ENCODE measurements at regions of chr13 and their contacts with region 1.

Region 1: DNA sequence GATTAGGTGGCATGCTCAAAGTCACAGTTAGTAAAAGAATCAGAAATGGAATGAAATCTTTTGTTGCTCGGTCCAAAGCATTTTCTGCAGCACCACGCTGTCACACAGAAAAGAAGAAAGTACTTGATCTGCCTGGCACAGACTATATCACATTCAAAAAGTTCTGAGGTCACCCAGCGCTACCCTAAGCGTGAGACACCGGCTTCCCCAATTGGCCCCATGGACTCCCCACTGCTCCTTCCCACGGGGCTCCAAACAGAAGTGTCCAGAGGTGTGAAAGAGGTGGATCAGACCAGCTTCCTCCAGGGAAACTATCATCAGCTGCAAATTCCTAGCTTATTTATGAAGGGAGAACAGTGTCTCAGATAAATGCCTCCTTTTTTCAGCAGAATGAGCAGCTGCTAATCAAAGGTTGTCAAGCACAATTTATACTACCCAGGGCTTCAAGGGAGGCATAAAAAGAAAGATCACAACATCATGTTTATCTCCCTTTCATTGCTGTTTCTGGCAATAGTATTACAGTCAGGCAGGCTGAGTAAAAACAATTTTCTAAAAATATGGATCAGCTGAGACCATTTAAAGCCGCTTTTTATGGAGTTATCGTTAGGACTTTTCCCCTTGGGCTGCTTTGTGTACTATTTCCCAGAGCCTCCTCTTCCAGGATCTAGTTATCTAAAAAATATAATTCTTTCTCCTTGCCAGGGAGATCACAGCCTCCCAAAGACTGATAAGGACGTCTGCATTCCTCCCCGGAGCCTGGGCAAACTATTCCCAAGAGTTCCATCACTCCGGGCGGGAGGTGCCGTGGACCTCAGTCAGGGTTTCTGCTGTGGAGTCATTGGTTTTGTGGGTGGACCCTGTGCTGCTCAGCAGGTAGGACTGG is 208.0 kb downstream of the LHFPL6 start:
- DNase-seq: no peak
- ATAC-seq: peak; percentile 40 to 73 (median 45)
- H3K4me3 ChIP-seq: peak overlapping the region in 5 of 10 donors; percentile 7 to 15 (median 8)
- H3K27ac ChIP-seq: peak overlapping the region in 9 of 10 donors; percentile 6 to 73 (median 52)
- H3K4me1 ChIP-seq: peaks cover 0 to 74% (median 46%) of the 10 kb centered on the region in 9 donors
- H3K27me3 ChIP-seq: no peaks in the 10 kb centered on the region
- CTCF ChIP-seq: no peak

Region 2: GRCh38 chr13:39326469-39327171 is 68.4 kb before region 1 on chr13:
- intact Hi-C with region 1: loop called in 1 of 10 experiments (anchors 5 kb)
- DNase-seq: peak in 1 of 2 donors; percentile 36
- ATAC-seq: peak in 4 of 8 donors; percentile 16 to 31 (median 21)
- H3K4me3 ChIP-seq: no peak overlapping the region
- H3K27ac ChIP-seq: peak overlapping the region in 7 of 10 donors; percentile 5 to 69 (median 26)
- H3K4me1 ChIP-seq: peaks cover 0 to 51% (median 29%) of the 10 kb centered on the region in 9 donors
- H3K27me3 ChIP-seq: no peaks in the 10 kb centered on the region
- CTCF ChIP-seq: no peak

Measured in heart right ventricle (tissue), 16 donors.